Heart right ventricle (tissue), 16 donors: ENCODE measurements at regions of chr5 and their contacts with region 1.

Region 1: DNA sequence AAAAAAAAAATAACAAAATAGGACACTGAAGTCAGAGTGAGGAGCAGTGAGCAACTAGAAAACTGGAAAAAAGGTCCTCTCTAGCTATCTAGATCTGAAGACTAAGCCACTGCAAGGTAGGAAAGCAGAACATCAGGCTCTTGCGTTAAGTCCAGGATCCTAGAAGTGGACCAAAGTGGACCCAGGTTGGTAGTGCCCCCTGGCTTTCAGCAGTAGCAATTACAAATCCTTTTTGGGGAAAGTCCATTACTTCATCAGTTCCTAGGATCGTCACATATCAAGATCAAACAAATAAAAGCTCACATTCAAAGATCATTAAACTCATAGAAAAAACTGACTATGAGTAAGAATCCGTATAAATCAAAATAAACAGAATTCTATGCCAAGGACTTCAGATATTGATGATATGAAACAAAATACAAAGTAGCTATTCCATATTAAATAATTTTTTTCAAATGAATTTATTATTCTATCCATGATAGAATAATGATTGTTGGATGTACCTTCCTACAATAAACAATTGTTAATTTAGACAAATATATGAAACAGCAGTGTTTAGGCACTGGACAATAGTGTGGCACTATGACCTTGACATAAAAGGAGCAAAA is 6.5 kb upstream of the RICTOR start:
- DNase-seq: peak; percentile 27 to 42
- ATAC-seq: peak; percentile 63 to 90 (median 79)
- H3K4me3 ChIP-seq: no peak overlapping the region
- H3K27ac ChIP-seq: no peak overlapping the region
- H3K4me1 ChIP-seq: peaks cover 0 to 23% (median 6%) of the 10 kb centered on the region in 9 donors
- H3K27me3 ChIP-seq: no peaks in the 10 kb centered on the region
- CTCF ChIP-seq: peak; percentile 73 to 94 (median 89)

Region 2: DNA sequence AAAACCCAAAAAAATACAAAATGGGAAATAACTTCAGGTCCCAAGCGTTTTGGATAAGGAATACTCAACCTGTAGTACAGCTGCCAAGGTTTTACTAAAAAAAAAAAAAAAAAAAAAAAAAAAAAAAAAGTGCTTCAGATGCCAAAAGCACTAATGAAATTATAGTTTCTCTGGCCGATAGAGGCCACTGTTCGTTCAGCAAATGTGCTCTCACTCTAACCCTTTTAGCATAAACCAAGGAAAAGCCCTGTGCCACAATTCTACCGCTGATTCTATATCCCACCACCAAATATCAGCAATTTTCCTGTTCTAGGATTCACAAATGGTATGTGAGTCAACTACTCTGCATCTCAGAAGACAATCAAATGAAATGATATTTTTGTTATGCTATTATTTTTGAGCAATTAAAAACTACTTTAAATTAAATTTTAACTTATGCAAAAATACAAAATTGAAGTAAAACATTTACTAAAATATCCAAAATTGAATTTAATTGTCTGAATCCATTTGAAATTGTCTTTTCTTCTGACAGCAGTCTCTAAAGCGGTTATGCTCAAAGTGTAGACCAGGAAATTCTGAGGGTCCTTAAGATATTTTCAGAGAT is 86.3 kb before region 1 on chr5:
- intact Hi-C with region 1: loop called in 5 of 10 experiments (anchors 1 to 5 kb)
- DNase-seq: peak in 1 of 2 donors; percentile 20
- ATAC-seq: peak; percentile 50 to 85 (median 78)
- H3K4me3 ChIP-seq: no peak overlapping the region
- H3K27ac ChIP-seq: no peak overlapping the region
- H3K4me1 ChIP-seq: peaks cover 0 to 22% (median 5%) of the 10 kb centered on the region in 9 donors
- H3K27me3 ChIP-seq: no peaks in the 10 kb centered on the region
- CTCF ChIP-seq: peak; percentile 32 to 72 (median 59)

Region 3: DNA sequence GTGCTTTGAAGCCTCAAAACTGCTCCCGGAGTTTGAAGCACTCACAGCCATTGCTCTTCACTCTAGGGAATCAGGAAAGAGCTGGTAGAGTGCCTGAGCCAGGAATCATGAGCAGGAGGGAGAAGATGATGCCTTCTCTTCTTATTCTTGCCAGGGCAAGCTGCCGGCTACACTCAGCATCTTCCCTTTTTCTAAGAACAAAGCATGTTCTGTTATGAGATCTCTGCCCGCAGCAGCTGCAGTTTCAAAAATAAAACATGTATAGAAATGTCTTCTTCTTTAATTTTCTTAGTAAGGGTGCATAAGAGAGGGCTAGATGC is 51.4 kb after region 1 on chr5:
- intact Hi-C with region 1: no loop called
- DNase-seq: no peak
- ATAC-seq: no peak
- H3K4me3 ChIP-seq: no peak overlapping the region
- H3K27ac ChIP-seq: no peak overlapping the region
- H3K4me1 ChIP-seq: peaks cover 0 to 8% (median 0%) of the 10 kb centered on the region in 9 donors
- H3K27me3 ChIP-seq: peaks cover 0 to 2% (median 0%) of the 10 kb centered on the region in 7 donors
- CTCF ChIP-seq: no peak